ENCODE measurements at regions of chr4 and their contacts with region 1.

Region 1: DNA sequence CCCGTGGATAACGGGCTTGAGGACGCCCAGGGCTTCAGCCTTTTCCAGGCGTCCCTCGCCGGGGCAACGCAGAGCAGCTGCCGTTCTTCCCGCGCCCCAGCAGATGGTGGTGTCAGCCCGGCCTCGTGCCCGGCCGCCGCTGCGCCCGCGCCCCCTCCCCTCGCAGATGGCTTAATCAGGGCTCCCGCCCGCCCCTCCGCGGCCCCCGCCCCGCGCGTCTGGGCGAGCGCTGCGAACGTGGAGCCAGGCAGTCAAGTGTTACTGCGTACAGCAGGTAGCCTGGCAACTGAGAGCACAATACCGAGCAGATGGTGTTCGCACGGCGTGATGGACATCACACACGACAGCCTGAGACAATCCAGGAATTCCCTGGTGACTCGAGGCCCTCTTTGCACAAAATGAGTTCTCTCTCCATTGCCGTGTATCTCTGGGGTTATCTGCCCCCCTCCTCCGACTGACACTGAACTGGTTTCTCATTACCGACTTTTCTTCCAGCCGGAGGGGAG is 69.3 kb downstream of the MGST2 start:
- DNase-seq: peak; percentile 73
- H3K4me3 Mint-ChIP-seq: peak overlapping the region; percentile 46
- H3K27ac Mint-ChIP-seq: no peak overlapping the region
- H3K4me1 Mint-ChIP-seq: peaks cover 16% of the 10 kb centered on the region
- H3K27me3 Mint-ChIP-seq: peaks cover 40% of the 10 kb centered on the region

Region 2: DNA sequence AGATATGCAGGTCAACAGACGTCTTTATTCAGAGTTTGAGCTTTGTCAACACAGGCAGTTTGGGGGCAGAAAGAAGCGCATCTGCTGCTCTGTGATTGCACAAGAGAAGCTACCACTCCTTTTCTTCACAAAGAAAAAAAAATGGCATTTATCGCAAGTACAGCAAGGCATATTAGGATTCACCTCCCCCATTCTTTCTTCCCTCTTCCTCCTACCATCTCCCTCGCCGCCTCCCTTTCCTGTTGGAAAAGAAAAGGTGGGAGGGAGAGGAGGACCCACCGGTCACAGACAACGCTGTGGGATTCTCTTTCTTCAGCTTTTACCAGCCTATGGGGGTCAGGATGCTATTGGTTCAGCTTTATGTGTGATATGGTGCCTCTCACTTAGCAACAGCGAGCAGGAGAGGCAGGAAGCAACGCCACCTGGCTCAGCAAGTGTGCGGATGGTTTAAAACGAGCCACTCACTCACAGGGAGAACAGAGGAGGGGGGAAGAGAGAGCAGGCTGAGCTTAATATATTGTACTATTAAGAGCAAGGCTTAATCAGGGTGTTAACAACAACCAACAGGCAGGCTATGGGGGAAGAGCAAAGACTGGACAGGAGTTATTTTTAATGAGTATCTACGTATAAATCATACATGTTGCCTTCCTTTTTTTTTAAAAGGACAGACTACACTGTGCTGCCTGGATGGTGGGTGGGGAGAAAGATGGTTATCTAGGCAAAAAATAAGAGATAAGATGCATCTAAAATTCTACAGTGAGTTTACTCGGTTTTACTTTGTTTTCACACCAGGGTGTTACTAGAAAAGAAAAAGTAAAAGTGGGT is 314.3 kb after region 1 on chr4:
- CTCF ChIA-PET with region 1: interaction called, 3 read pairs
- POLR2A ChIA-PET with region 1: no interaction called
- intact Hi-C with region 1: loop called (anchors 1 kb)
- DNase-seq: peak; percentile 62
- H3K4me3 Mint-ChIP-seq: peak overlapping the region; percentile 57
- H3K27ac Mint-ChIP-seq: no peak overlapping the region
- H3K4me1 Mint-ChIP-seq: peaks cover 24% of the 10 kb centered on the region
- H3K27me3 Mint-ChIP-seq: peaks cover 32% of the 10 kb centered on the region

Measured in activated CD4-positive, alpha-beta memory T cell treated with anti-CD3 and anti-CD28 coated beads for 36 hours (primary cell).